ENCODE measurements at regions of chr16 and their contacts with region 1.

Region 1: GRCh38 chr16:25747160-25747758 is 55.5 kb downstream of the HS3ST4 start:
- ATAC-seq: no peak
- H3K4me3 ChIP-seq: no peak overlapping the region
- H3K27ac ChIP-seq: no peak overlapping the region
- H3K4me1 ChIP-seq: peaks cover 9 to 19% of the 10 kb centered on the region in 2 donors

Region 2: GRCh38 chr16:25501530-25502255 is 245.6 kb before region 1 on chr16:
- in situ Hi-C with region 1: no loop called
- ATAC-seq: no peak
- H3K4me3 ChIP-seq: no peak overlapping the region
- H3K27ac ChIP-seq: no peak overlapping the region
- H3K4me1 ChIP-seq: no peaks in the 10 kb centered on the region

Region 3: DNA sequence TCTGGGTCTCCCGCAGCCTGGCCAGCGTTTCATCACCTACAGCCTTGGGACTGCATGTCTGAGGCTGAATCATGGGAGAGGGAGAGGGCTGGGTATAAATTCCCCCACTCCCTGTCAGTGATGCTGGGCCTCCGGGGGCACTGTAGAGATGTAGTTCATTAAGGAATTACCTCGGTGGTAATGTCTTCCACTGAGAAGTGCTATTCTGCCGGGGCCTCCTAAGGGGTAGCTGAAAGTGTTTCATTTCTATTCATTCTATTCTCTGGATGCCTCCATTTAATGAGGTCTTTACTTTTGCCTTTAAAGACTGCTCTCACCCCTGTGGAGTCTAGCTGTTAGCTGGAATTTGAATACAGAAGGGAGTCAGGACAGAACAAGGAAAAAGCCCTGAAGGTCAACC is 171.9 kb before region 1 on chr16:
- in situ Hi-C with region 1: no loop called
- ATAC-seq: peak in 5 of 8 experiments; percentile 20 to 83 (median 59)
- H3K4me3 ChIP-seq: no peak overlapping the region
- H3K27ac ChIP-seq: no peak overlapping the region
- H3K4me1 ChIP-seq: peaks cover 0 to 5% of the 10 kb centered on the region in 2 donors

Region 4: GRCh38 chr16:25633549-25633948 is 113.7 kb before region 1 on chr16:
- in situ Hi-C with region 1: loop called in 1 of 9 experiments (anchors 25 kb)
- ATAC-seq: peak in 6 of 8 experiments; percentile 41 to 81 (median 64)
- H3K4me3 ChIP-seq: no peak overlapping the region
- H3K27ac ChIP-seq: no peak overlapping the region
- H3K4me1 ChIP-seq: no peaks in the 10 kb centered on the region

Region 5: GRCh38 chr16:25812215-25812614 is 65.0 kb after region 1 on chr16:
- in situ Hi-C with region 1: loop called in 1 of 9 experiments (anchors 10 kb)
- ATAC-seq: no peak
- H3K4me3 ChIP-seq: no peak overlapping the region
- H3K27ac ChIP-seq: no peak overlapping the region
- H3K4me1 ChIP-seq: no peaks in the 10 kb centered on the region

Measured in motor neuron (in vitro differentiated cells).